Astrocyte of the cerebellum (primary cell): ENCODE measurements at regions of chr5 and their contacts with region 1.

Region 1: GRCh38 chr5:164868761-164869160 is 1363.3 kb downstream of the MAT2B start:
- DNase-seq: no peak
- H3K4me3 ChIP-seq: no peak overlapping the region
- CTCF ChIP-seq: no peak

Region 2: GRCh38 chr5:164809831-164810230 is 58.9 kb before region 1 on chr5:
- in situ Hi-C with region 1: no loop called
- DNase-seq: peak; percentile 16
- H3K4me3 ChIP-seq: no peak overlapping the region
- CTCF ChIP-seq: no peak

Region 3: DNA sequence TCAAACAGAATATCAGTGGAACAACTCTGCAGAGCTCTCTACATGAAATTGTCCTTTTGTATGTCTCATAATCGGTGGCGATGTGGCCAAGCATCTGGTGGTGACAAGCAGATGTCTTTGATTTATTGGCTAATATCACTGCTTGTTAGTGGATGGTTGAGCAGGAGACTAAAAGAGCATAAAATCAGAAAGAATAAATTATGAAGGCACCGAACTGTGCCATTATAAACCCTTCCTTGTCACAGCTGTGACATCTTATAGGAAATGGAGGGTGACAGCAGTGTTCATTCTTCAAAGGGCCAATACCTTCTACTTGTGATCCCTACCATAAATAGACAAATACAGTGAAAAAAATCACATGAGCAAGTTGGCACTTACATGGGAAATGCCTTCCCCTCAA is 40.9 kb after region 1 on chr5:
- in situ Hi-C with region 1: loop called (anchors 5 kb)
- DNase-seq: no peak
- H3K4me3 ChIP-seq: no peak overlapping the region
- CTCF ChIP-seq: no peak

Region 4: GRCh38 chr5:165108809-165109208 is 240.0 kb after region 1 on chr5:
- in situ Hi-C with region 1: no loop called
- DNase-seq: no peak
- H3K4me3 ChIP-seq: no peak overlapping the region
- CTCF ChIP-seq: no peak